ENCODE measurements at regions of chr12 and their contacts with region 1.

Region 1: DNA sequence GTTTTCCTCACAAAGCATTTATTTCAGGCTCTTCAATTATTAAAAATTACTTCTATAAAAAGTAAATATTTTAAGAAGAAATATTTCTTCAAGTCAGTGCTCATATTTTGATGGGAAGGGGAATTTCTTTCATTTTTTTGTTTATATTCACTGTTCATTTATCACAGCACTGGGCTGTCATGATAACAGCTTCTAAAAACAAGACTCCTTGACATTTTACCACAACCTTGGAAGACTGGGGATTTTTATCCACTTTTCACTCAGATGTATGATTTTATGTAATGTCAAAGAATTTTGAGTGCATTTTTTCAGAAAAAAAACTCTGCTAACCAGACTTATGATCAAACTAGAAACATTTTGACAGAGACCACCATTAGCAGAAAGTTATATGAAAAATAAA is 149.7 kb downstream of the PHLDA1 start:
- DNase-seq: no peak
- ATAC-seq: no peak
- H3K4me3 ChIP-seq: no peak overlapping the region
- H3K27ac ChIP-seq: no peak overlapping the region
- H3K4me1 ChIP-seq: peaks cover 19% of the 10 kb centered on the region
- H3K27me3 ChIP-seq: no peaks in the 10 kb centered on the region
- CTCF ChIP-seq: no peak
- EP300 ChIP-seq: no peak
- POLR2A ChIP-seq: no peak
- RAD21 ChIP-seq: no peak

Region 2: DNA sequence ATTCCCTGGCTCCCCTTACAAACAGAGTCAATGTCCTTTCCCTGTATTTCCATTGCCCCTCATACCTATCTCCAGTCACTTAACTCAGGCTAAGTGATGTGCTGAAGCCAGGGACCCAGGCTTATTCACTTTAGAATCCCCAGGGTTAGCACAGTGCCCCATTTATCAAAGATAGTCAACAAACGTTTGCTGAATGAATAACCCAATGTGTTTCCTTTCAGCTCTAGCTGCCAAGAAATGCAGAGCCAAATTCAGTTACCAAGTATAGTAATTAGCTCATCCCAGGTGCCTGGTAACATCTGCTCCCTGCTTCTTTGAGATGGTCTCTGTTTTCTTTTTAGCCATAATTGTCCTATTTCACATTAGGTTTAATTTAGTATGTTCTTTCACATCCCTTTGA is 39.8 kb before region 1 on chr12:
- CTCF ChIA-PET with region 1: no interaction called
- POLR2A ChIA-PET with region 1: no interaction called
- in situ Hi-C with region 1: no loop called
- intact Hi-C with region 1: loop called (anchors 1 kb)
- DNase-seq: no peak
- ATAC-seq: no peak
- H3K4me3 ChIP-seq: no peak overlapping the region
- H3K27ac ChIP-seq: no peak overlapping the region
- H3K4me1 ChIP-seq: peaks cover 30% of the 10 kb centered on the region
- H3K27me3 ChIP-seq: no peaks in the 10 kb centered on the region
- CTCF ChIP-seq: no peak
- EP300 ChIP-seq: no peak
- POLR2A ChIP-seq: no peak
- RAD21 ChIP-seq: no peak

Region 3: GRCh38 chr12:77010691-77011548 is 1129.0 kb after region 1 on chr12:
- CTCF ChIA-PET with region 1: no interaction called
- POLR2A ChIA-PET with region 1: no interaction called
- in situ Hi-C with region 1: no loop called
- intact Hi-C with region 1: no loop called
- DNase-seq: peak; percentile 49
- ATAC-seq: peak; percentile 97
- H3K4me3 ChIP-seq: no peak overlapping the region
- H3K27ac ChIP-seq: no peak overlapping the region
- H3K4me1 ChIP-seq: peaks cover 7% of the 10 kb centered on the region; the same call in 1 of the 2 replicates
- H3K27me3 ChIP-seq: peaks cover 0 to 5% of the 10 kb centered on the region in 2 experiments; a peak in 1 of 5 replicates
- CTCF ChIP-seq: peak; percentile 81
- EP300 ChIP-seq: no peak
- POLR2A ChIP-seq: no peak
- RAD21 ChIP-seq: peak; percentile 49; the same call in 1 of the 2 replicates